GM12878 (cell line): ENCODE measurements at regions of chr3 and their contacts with region 1.

Region 1: GRCh38 chr3:171566803-171567422 is 106.7 kb upstream of the TNIK start:
- DNase-seq: peak; percentile 42
- ATAC-seq: peak; percentile 81
- H3K4me3 ChIP-seq: no peak overlapping the region
- H3K27ac ChIP-seq: no peak overlapping the region
- H3K4me1 ChIP-seq: peaks cover 3% of the 10 kb centered on the region; the same call in 1 of the 2 replicates
- H3K27me3 ChIP-seq: no peaks in the 10 kb centered on the region
- CTCF ChIP-seq: peak; percentile 46 to 86 (median 63); a peak in 5 of 6 replicates
- EP300 ChIP-seq: no peak
- POLR2A ChIP-seq: no peak
- RAD21 ChIP-seq: peak; percentile 95

Region 2: DNA sequence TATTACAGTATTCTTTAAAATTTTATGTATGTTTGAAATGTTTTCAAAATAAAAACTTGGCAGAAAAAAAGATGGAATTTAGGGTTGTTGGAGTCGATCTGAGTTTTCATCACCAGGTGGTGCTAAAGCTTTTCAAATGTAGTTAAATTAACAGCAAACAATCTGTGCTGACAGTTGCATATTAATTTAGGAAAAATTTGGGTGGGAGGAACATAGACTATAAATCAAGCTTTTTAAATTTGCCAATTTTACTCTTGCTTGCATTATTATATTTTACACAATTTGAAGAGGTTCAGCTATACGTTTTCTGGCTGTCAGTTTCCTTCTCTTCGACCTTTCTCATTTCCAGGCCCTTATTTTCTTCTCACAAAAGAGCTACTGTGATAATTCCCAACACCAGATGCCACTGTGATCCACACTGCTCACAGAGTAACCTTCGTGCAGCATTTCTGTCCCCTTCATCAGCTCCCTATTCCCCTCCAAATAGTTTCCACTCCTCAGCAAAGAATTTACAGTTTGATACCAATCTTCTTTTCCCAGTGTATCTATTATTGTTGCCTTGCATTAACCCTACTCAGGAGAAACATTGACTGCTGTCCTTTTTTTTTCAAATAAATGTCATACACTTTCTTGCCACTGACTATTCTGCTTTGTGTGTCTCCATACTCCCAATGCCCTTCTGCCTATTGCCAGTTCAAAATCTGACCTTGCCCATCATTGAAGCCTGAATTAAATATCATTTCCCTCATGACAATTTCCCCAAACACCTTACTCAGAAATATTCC is 605.1 kb before region 1 on chr3:
- CTCF ChIA-PET with region 1: interaction called, 34 read pairs
- POLR2A ChIA-PET with region 1: no interaction called
- RAD21 ChIA-PET with region 1: interaction called, 49 read pairs
- SMC1A ChIA-PET with region 1: interaction called, 63 read pairs
- in situ Hi-C with region 1: loop called (anchors 5 kb)
- intact Hi-C with region 1: loop called (anchors 5 kb)
- DNase-seq: no peak
- ATAC-seq: 0 out of 3 replicates have a peak, but pooled peaks have one; percentile 30
- H3K4me3 ChIP-seq: no peak overlapping the region
- H3K27ac ChIP-seq: no peak overlapping the region
- H3K4me1 ChIP-seq: no peaks in the 10 kb centered on the region
- H3K27me3 ChIP-seq: no peaks in the 10 kb centered on the region; a peak in 1 of 4 replicates
- CTCF ChIP-seq: peak; percentile 31 to 64 (median 43); a peak in 5 of 6 replicates
- EP300 ChIP-seq: no peak
- POLR2A ChIP-seq: no peak
- RAD21 ChIP-seq: peak; percentile 73

Region 3: DNA sequence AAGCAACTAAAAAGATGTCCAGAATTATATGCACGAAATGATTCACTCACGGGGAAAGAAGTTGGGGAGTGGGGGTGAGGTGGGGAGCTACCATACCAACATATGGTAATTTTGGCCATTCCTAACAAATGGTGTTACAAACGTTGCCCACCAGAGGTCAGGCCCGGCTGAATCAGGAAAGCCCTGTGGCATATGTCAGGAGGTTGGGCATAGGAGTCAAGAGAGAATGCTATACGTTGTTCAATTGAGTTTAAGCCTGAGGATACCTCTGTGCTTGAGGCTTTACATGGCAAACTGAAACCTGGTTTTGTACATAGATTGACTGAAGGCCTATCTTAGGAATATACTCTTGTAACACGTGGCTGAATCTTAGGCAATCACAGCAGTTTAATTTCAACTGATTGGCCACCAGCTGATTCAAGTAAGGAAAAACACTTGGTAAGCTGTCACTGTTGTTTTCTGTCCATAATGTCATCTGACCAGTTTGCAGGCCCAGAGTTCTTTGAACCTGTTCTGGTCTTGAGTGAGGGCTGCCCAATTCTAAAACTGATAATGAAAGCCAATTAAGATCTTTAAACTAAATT is 517.0 kb before region 1 on chr3:
- CTCF ChIA-PET with region 1: interaction called, 94 read pairs
- POLR2A ChIA-PET with region 1: no interaction called
- RAD21 ChIA-PET with region 1: interaction called, 59 read pairs
- SMC1A ChIA-PET with region 1: interaction called, 79 read pairs
- in situ Hi-C with region 1: loop called (anchors 5 kb)
- intact Hi-C with region 1: loop called (anchors 1 kb)
- DNase-seq: peak; percentile 34
- ATAC-seq: peak; percentile 91
- H3K4me3 ChIP-seq: no peak overlapping the region
- H3K27ac ChIP-seq: no peak overlapping the region
- H3K4me1 ChIP-seq: no peaks in the 10 kb centered on the region
- H3K27me3 ChIP-seq: no peaks in the 10 kb centered on the region
- CTCF ChIP-seq: peak; percentile 65 to 81 (median 72)
- EP300 ChIP-seq: no peak
- POLR2A ChIP-seq: no peak
- RAD21 ChIP-seq: peak; percentile 87

Region 4: DNA sequence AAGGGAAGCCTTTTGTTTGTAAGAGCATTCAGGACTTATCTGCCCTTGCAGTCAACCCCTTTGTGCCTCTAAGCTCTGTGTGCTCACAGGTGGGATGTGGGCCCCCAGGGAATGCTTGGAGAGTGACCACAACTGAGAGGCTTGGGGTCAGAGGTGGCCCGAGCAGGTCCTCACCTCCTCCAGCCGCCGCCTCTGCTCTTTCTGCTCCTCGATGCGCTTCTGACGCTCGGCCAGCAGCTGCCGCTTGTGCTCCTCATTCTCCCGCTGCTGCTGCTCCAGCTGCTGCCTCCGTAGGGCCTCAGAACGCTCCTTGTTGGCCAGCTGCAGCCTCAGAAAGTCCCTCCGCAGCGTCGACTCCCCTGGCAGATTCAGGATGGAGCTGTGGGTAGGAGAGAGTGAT is 409.6 kb before region 1 on chr3:
- CTCF ChIA-PET with region 1: interaction called, 37 read pairs
- POLR2A ChIA-PET with region 1: no interaction called
- RAD21 ChIA-PET with region 1: interaction called, 4 read pairs
- SMC1A ChIA-PET with region 1: interaction called, 7 read pairs
- in situ Hi-C with region 1: loop called (anchors 5 kb)
- intact Hi-C with region 1: no loop called
- DNase-seq: no peak
- ATAC-seq: no peak
- H3K4me3 ChIP-seq: no peak overlapping the region
- H3K27ac ChIP-seq: no peak overlapping the region
- H3K4me1 ChIP-seq: no peaks in the 10 kb centered on the region
- H3K27me3 ChIP-seq: no peaks in the 10 kb centered on the region
- CTCF ChIP-seq: no peak
- EP300 ChIP-seq: no peak
- POLR2A ChIP-seq: peak; percentile 48
- RAD21 ChIP-seq: no peak

Region 5: DNA sequence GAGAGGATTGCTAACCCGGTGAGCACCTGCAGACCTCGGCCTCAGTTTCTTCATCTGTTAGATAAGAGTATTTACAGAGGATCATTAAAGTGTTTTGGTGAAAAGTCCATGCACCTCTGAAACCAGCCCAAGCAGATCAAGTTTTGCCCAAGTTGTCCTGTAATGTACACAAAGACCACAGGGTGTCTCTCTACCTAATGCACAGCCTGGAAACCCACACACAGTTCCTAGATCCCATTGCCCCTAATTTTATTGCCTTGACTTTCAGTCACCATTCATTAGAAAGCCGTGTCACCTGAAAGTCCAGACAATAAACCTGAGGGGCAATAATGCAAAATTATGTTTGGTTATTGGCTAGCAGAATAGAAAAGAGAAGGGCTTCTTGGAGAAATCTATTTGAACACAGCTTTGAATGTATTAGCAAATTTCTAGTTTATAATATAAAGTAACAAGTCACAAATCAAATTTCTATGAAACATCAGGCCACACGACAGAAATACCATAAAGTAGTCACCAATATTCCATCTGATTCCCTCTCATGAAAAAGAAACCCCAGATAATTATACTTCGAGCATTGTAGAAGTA is 379.1 kb before region 1 on chr3:
- CTCF ChIA-PET with region 1: interaction called, 49 read pairs
- POLR2A ChIA-PET with region 1: no interaction called
- RAD21 ChIA-PET with region 1: interaction called, 31 read pairs
- SMC1A ChIA-PET with region 1: interaction called, 45 read pairs
- in situ Hi-C with region 1: no loop called
- intact Hi-C with region 1: loop called (anchors 1 kb)
- DNase-seq: no peak
- ATAC-seq: peak; percentile 59
- H3K4me3 ChIP-seq: no peak overlapping the region
- H3K27ac ChIP-seq: no peak overlapping the region
- H3K4me1 ChIP-seq: peaks cover 42% of the 10 kb centered on the region
- H3K27me3 ChIP-seq: no peaks in the 10 kb centered on the region
- CTCF ChIP-seq: peak; percentile 65 to 77 (median 68)
- EP300 ChIP-seq: no peak
- POLR2A ChIP-seq: no peak
- RAD21 ChIP-seq: peak; percentile 80

Region 6: GRCh38 chr3:171257251-171258203 is 309.4 kb before region 1 on chr3:
- CTCF ChIA-PET with region 1: no interaction called
- POLR2A ChIA-PET with region 1: no interaction called
- RAD21 ChIA-PET with region 1: no interaction called
- SMC1A ChIA-PET with region 1: interaction called, 6 read pairs
- in situ Hi-C with region 1: no loop called
- intact Hi-C with region 1: loop called (anchors 10 kb)
- DNase-seq: peak; percentile 76
- ATAC-seq: peak; percentile 74
- H3K4me3 ChIP-seq: peak overlapping the region; percentile 31; the same call in 1 of the 2 replicates
- H3K27ac ChIP-seq: peak overlapping the region; percentile 87
- H3K4me1 ChIP-seq: peaks cover 86% of the 10 kb centered on the region
- H3K27me3 ChIP-seq: no peaks in the 10 kb centered on the region
- CTCF ChIP-seq: no peak
- EP300 ChIP-seq: peak in 1 of 2 experiments; percentile 63; a peak in 2 of 4 replicates
- POLR2A ChIP-seq: no peak
- RAD21 ChIP-seq: 0 out of 2 replicates have a peak, but pooled peaks have one; percentile 10

Region 7: DNA sequence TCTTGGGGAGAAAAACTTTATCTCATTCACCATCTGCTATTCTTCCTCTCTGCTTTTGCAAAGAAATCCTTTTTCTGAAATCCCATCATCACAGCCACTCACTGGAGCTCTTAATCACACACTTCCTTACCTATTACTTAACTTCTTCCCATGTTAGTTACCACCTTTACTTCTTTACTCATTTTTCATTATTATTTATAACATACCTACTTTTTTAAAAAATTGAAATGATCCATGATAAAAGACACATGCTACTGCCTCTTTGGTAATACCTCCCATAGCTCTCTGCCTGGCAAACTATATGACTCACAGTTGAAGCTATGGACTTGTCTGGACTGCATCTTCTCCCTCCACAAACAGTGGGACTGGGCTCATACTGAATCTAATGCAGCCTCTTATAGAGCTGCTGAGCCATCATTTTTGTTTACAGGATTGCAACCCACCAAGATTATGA is 257.0 kb before region 1 on chr3:
- CTCF ChIA-PET with region 1: no interaction called
- POLR2A ChIA-PET with region 1: no interaction called
- RAD21 ChIA-PET with region 1: no interaction called
- SMC1A ChIA-PET with region 1: no interaction called
- in situ Hi-C with region 1: no loop called
- intact Hi-C with region 1: no loop called
- DNase-seq: no peak
- ATAC-seq: peak; percentile 74
- H3K4me3 ChIP-seq: no peak overlapping the region
- H3K27ac ChIP-seq: peak overlapping the region; percentile 35; the same call in 1 of the 2 replicates
- H3K4me1 ChIP-seq: peaks cover 21% of the 10 kb centered on the region
- H3K27me3 ChIP-seq: no peaks in the 10 kb centered on the region
- CTCF ChIP-seq: no peak
- EP300 ChIP-seq: no peak
- POLR2A ChIP-seq: no peak
- RAD21 ChIP-seq: no peak

Region 8: DNA sequence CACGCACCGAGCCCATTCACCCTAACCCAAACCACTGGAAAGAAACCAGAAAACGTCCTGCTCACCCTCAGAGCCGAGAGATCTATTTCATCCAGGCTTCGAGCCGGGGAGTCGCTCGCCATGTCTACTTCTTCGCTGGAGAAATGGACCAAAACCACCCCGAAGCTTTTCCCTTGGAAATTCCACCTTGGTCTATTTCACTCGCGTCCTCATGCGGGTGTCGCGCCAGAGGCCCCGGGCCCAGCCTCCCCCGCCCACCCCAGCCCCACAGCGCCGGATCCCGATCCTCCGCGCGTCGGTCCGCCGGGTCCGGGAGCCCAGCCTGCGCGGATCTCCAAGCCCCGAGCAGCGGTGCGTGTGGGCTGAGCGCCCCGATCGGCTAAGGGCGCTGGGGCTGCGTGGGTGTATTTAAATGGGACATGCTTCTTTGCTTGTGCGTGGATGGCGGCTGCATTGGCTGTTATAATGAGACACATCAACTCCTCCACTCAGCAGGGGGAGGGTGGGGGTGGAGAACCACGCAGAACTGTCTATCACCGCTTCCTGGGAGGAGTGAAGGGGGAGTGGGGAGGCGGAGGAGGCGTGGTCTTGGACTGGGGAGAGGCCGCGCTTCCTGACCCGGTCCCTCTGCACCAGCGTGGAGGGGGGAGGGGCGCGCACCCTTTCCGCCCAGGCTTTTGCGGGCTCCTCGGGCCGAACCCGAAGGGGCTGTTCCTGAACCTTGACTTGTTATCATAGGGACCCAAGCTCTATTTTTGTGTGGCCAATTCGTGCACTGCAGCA is 106.8 kb before region 1 on chr3 and contains the start of gene TNIK:
- CTCF ChIA-PET with region 1: interaction called, 10 read pairs
- POLR2A ChIA-PET with region 1: no interaction called
- RAD21 ChIA-PET with region 1: interaction called, 6 read pairs
- SMC1A ChIA-PET with region 1: interaction called, 12 read pairs
- in situ Hi-C with region 1: no loop called
- intact Hi-C with region 1: loop called (anchors 2 kb)
- DNase-seq: peak; percentile 95
- ATAC-seq: peak; percentile 85
- H3K4me3 ChIP-seq: peak within 1 kb of the TSS; percentile 98
- H3K27ac ChIP-seq: peak within 1 kb of the TSS; percentile 80
- H3K4me1 ChIP-seq: peaks cover 10% of the 10 kb centered on the region
- H3K27me3 ChIP-seq: no peaks in the 10 kb centered on the region
- CTCF ChIP-seq: peak in 2 of 3 experiments; percentile 26 to 44; a peak in 2 of 6 replicates
- EP300 ChIP-seq: peak; percentile 40 to 60; a peak in 2 of 4 replicates
- POLR2A ChIP-seq: peak; percentile 91
- RAD21 ChIP-seq: peak; percentile 23; the same call in 1 of the 2 replicates
- polyA plus RNA-seq, gene TNIK: 13.9 to 15.9 TPM